ENCODE measurements at regions of chr12 and their contacts with region 1.

Region 1: GRCh38 chr12:104494137-104494792 is 37.5 kb downstream of the CHST11 start:
- DNase-seq: peak in 32 of 35 experiments; percentile 16 to 76 (median 52)
- ATAC-seq: peak; percentile 43 to 60 (median 56)
- H3K4me3 ChIP-seq: peak overlapping the region in 1 of 2 donors; percentile 36
- H3K4me3 Mint-ChIP-seq: peak overlapping the region; percentile 57 to 73 (median 72)
- H3K27ac ChIP-seq: peak overlapping the region; percentile 40
- H3K27ac Mint-ChIP-seq: peak overlapping the region; percentile 94 to 95
- H3K4me1 ChIP-seq: peaks cover 38 to 83% of the 10 kb centered on the region in 2 experiments
- H3K4me1 Mint-ChIP-seq: peaks cover 84 to 93% (median 93%) of the 10 kb centered on the region in 3 donors
- H3K27me3 ChIP-seq: no peaks in the 10 kb centered on the region
- H3K27me3 Mint-ChIP-seq: no peaks in the 10 kb centered on the region

Region 2: GRCh38 chr12:102913453-102914226 is 1580.6 kb before region 1 on chr12:
- CTCF ChIA-PET with region 1: no interaction called
- POLR2A ChIA-PET with region 1: interaction called in 1 of 2 experiments, 12 read pairs
- DNase-seq: no peak
- ATAC-seq: no peak
- H3K4me3 ChIP-seq: no peak overlapping the region
- H3K4me3 Mint-ChIP-seq: no peak overlapping the region
- H3K27ac ChIP-seq: no peak overlapping the region
- H3K27ac Mint-ChIP-seq: no peak overlapping the region
- H3K4me1 ChIP-seq: peaks cover 0 to 5% of the 10 kb centered on the region in 2 experiments
- H3K4me1 Mint-ChIP-seq: peaks cover 5 to 10% (median 6%) of the 10 kb centered on the region in 3 donors
- H3K27me3 ChIP-seq: peaks cover 2 to 13% of the 10 kb centered on the region in 2 experiments
- H3K27me3 Mint-ChIP-seq: peaks cover 11 to 15% of the 10 kb centered on the region in 2 donors